ENCODE measurements at regions of chrX and their contacts with region 1.

Region 1: GRCh38 chrX:30504309-30504708 is 73.3 kb downstream of the TASL start:
- DNase-seq: no peak
- ATAC-seq: no peak
- H3K4me3 ChIP-seq: no peak overlapping the region
- H3K27ac ChIP-seq: no peak overlapping the region
- H3K4me1 ChIP-seq: no peaks in the 10 kb centered on the region
- H3K27me3 ChIP-seq: no peaks in the 10 kb centered on the region

Region 2: GRCh38 chrX:29707088-29707487 is 797.2 kb before region 1 on chrX:
- intact Hi-C with region 1: no loop called
- DNase-seq: no peak
- ATAC-seq: no peak
- H3K4me3 ChIP-seq: no peak overlapping the region
- H3K27ac ChIP-seq: no peak overlapping the region
- H3K4me1 ChIP-seq: no peaks in the 10 kb centered on the region
- H3K27me3 ChIP-seq: no peaks in the 10 kb centered on the region

Region 3: DNA sequence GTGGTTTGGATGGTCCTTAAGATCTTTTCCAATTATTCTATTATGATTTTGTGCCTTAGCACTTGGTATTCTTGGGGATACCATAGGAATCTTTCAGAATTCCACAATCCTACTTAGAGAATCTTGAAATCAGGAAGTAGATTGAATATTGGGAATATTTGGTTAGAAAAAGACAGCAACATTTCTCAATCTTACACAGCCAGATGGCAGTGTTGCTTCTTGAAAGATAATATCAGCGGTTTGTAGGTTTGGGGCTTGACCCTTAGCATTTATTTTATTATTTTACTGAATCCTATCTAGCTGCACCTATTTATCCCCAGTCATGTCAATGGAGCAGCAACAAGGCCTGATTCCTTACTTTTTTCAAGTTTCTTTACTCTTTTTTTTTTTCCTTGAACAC is 228.8 kb before region 1 on chrX:
- intact Hi-C with region 1: loop called in 2 of 4 experiments (anchors 5 to 10 kb)
- DNase-seq: no peak
- ATAC-seq: no peak
- H3K4me3 ChIP-seq: no peak overlapping the region
- H3K27ac ChIP-seq: no peak overlapping the region
- H3K4me1 ChIP-seq: no peaks in the 10 kb centered on the region
- H3K27me3 ChIP-seq: no peaks in the 10 kb centered on the region